IMR-90 (cell line): ENCODE measurements at regions of chr3 and their contacts with region 1.

Region 1: GRCh38 chr3:173221010-173221409 is 80.0 kb upstream of the SPATA16 start:
- DNase-seq: no peak
- ATAC-seq: no peak
- H3K4me3 ChIP-seq: no peak overlapping the region
- H3K27ac ChIP-seq: no peak overlapping the region
- H3K4me1 ChIP-seq: no peaks in the 10 kb centered on the region
- H3K27me3 ChIP-seq: no peaks in the 10 kb centered on the region
- CTCF ChIP-seq: peak; percentile 39
- POLR2A ChIP-seq: no peak
- RAD21 ChIP-seq: peak; percentile 31; the same call in 1 of the 2 replicates

Region 2: DNA sequence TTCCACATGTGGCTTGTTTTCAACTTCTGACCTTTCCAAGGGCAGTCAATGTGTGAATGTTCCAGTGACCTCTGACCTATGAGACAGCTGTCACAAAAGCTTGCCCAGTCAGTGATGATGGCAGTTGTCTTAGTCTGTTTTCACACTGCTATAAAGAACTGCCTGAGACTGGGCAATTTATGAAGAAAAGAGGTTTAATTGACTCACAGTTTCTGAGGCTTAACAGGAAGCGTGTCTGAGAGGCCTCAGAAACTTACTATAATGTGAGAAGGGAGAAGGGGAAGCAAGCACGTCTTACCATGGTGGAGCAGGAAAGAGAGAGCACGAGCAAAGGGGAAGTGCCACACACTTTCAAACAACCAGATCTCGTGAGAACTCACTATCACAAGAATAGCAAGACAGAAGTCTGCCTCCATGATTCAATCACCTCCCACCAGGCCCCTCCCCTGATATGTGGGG is 374.9 kb before region 1 on chr3:
- CTCF ChIA-PET with region 1: no interaction called
- POLR2A ChIA-PET with region 1: interaction called, 13 read pairs
- dilution Hi-C with region 1: no loop called
- in situ Hi-C with region 1: no loop called
- intact Hi-C with region 1: no loop called
- DNase-seq: no peak
- ATAC-seq: no peak
- H3K4me3 ChIP-seq: no peak overlapping the region
- H3K27ac ChIP-seq: no peak overlapping the region
- H3K4me1 ChIP-seq: no peaks in the 10 kb centered on the region
- H3K27me3 ChIP-seq: peaks cover 5% of the 10 kb centered on the region; the same call in 1 of the 2 replicates
- CTCF ChIP-seq: no peak
- POLR2A ChIP-seq: no peak
- RAD21 ChIP-seq: no peak

Region 3: GRCh38 chr3:173173652-173174051 is 47.4 kb before region 1 on chr3:
- CTCF ChIA-PET with region 1: no interaction called
- POLR2A ChIA-PET with region 1: no interaction called
- dilution Hi-C with region 1: no loop called
- in situ Hi-C with region 1: no loop called
- intact Hi-C with region 1: no loop called
- DNase-seq: no peak
- ATAC-seq: no peak
- H3K4me3 ChIP-seq: no peak overlapping the region
- H3K27ac ChIP-seq: no peak overlapping the region
- H3K4me1 ChIP-seq: no peaks in the 10 kb centered on the region
- H3K27me3 ChIP-seq: no peaks in the 10 kb centered on the region
- CTCF ChIP-seq: no peak
- POLR2A ChIP-seq: no peak
- RAD21 ChIP-seq: no peak

Region 4: GRCh38 chr3:173395412-173396181 is 174.6 kb after region 1 on chr3:
- CTCF ChIA-PET with region 1: no interaction called
- POLR2A ChIA-PET with region 1: no interaction called
- dilution Hi-C with region 1: no loop called
- in situ Hi-C with region 1: no loop called
- intact Hi-C with region 1: no loop called
- DNase-seq: peak; percentile 74
- ATAC-seq: peak; percentile 83
- H3K4me3 ChIP-seq: peak overlapping the region; percentile 57
- H3K27ac ChIP-seq: peak overlapping the region; percentile 11
- H3K4me1 ChIP-seq: 0 out of 2 replicates have a peak, but pooled peaks cover 3% of the 10 kb centered on the region
- H3K27me3 ChIP-seq: peaks cover 3% of the 10 kb centered on the region; the same call in 1 of the 2 replicates
- CTCF ChIP-seq: no peak
- POLR2A ChIP-seq: peak; percentile 59; the same call in 1 of the 2 replicates
- RAD21 ChIP-seq: no peak